ENCODE measurements at regions of chr19 and their contacts with region 1.

Region 1: DNA sequence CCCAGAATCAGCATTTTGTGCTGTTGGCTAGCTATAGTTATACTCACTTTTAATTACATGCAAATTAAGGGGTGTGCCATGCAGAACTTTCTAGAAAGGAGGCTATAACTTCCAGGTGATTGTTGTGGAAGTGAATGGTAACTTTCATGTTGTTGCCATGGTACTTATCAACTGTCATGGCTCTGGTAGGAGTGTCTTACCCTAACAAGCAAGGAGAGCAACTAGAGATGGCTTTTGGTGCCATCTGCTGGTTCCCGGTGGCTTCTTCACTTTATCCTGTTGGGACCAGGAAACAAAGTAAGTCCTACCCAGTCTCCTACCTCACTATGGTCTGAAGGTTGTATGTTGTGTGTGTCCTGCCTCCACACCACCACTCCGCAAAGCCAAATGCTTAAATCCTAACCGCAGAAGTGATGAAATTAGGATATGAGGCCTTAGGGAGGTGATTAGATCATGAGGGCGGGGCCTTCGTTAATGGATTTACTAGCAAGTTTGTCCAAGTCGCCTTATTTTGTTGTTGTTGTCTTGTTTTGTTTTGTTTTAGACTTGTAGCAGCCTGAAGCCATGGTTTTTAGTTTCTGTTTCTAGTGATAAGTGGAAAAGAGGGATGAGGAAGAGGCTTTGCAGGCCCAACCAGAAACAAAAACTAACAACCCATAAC is 22.6 kb downstream of the FBXL12 start:
- H3K4me3 ChIP-seq: no peak overlapping the region
- H3K27ac ChIP-seq: no peak overlapping the region
- H3K4me1 ChIP-seq: no peaks in the 10 kb centered on the region
- CTCF ChIP-seq: peak; percentile 47; the same call in 1 of the 2 replicates

Region 2: DNA sequence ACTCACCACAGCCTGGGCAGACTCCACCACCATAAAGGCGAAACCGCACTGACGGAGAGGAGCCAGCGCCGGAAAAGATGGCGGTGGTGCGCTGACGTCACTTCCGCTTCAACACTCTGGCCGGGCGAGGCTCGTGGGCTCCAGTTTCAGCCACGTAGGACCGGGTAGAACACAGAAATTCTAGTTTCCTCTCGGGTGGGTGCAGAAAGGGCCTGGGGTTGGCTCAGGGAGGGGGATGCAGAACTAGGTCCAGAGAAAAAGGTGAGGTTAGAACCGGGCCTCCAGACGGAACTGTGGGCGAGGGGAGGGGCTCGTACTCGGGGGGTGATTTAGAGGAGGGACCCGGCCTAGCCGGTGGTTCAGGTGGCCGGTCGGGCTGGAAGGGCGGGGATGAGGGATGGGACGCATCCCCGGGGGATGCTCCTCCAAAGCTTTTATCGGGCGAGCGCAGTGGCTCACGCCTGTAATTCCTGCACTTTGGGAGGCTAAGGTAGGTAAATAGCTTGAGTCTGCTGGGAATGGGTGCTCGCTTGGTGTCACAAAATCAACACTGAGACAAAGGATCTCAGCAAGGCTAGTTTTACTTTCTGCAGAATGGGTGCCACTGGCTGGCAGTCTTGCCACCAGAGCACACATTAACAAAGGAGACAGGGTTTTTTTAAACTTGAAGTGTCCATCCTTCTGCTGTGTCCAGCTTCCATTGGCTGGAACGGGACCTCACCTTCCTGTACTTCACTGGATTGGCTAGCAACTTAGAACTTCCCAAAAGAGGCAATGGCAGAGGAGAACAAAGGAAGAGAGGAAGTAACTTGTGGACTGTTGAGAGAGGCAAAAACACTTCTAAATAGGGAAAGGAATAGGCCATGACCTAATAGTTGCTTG is 174.8 kb before region 1 on chr19 and contains the start of gene ZNF561:
- CTCF ChIA-PET with region 1: interaction called, 46 read pairs
- POLR2A ChIA-PET with region 1: interaction called, 4 read pairs
- H3K4me3 ChIP-seq: peak within 1 kb of the TSS; percentile 94
- H3K27ac ChIP-seq: peak within 1 kb of the TSS; percentile 79
- H3K4me1 ChIP-seq: 0 out of 2 replicates have a peak, but pooled peaks cover 2% of the 10 kb centered on the region
- CTCF ChIP-seq: no peak

Region 3: DNA sequence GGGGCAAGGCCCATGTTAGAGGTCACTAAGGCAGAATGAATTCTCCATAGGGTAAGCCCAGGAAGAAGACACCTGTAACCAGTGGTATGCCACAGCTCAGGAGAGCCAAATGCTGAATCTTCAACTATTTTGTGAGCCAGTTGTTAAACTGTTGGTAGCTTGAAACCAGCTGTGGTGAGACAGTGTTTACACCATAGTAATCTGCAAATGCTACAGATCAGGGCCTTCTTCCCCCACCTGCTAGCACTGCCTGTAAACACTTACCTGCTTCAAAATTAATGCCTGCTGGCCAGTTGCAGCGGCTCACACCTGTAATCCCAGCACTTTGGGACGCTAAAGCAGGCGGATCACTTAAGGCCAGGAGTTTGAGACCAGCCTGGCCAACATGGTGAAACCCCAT is 10.6 kb after region 1 on chr19:
- CTCF ChIA-PET with region 1: interaction called, 10 read pairs
- POLR2A ChIA-PET with region 1: interaction called, 7 read pairs
- H3K4me3 ChIP-seq: no peak overlapping the region
- H3K27ac ChIP-seq: no peak overlapping the region
- H3K4me1 ChIP-seq: no peaks in the 10 kb centered on the region
- CTCF ChIP-seq: no peak

Region 4: DNA sequence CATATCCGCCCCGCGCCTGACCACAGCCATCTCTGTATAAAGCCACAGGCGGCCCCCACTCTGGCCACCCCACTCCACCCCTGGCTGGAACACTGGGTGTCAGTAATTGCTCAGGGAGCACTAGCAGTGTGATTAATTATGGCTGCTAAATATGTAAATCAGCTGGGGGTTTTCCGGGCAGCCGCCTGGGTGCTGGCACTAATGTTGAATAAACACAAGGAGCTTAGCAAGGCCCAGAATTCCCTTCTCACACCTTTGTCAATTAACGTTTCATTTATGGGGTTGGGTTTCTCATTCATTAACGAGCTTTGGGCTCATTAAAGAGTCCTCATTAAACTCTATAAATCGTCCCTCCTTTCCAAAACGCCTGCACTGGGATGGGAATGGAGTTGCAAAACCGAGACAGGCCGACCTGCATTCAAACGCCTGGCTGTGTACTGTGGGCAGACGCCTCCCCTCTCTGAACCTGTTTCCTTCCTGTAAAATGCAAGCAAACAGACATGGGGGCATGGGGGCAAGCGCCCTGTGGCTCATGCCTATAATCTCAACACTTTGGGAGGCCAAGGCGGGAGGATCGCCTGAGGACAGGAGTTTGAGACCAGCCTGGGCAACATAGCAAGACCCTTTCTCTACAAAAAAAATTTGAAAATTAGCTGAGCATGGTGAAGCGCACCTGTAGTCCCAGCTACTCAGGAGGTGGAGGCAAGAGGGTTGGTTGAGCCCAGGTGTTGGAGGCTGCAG is 157.7 kb after region 1 on chr19:
- CTCF ChIA-PET with region 1: no interaction called
- POLR2A ChIA-PET with region 1: no interaction called
- H3K4me3 ChIP-seq: no peak overlapping the region
- H3K27ac ChIP-seq: no peak overlapping the region
- H3K4me1 ChIP-seq: no peaks in the 10 kb centered on the region
- CTCF ChIP-seq: no peak

Measured in HEK293 (cell line).